ENCODE measurements at regions of chr4 and their contacts with region 1.

Region 1: GRCh38 chr4:177401658-177402273 is 40.5 kb downstream of the AGA start:
- DNase-seq: no peak
- H3K4me3 Mint-ChIP-seq: no peak overlapping the region
- H3K27ac Mint-ChIP-seq: no peak overlapping the region
- H3K4me1 Mint-ChIP-seq: peaks cover 48% of the 10 kb centered on the region
- H3K27me3 Mint-ChIP-seq: peaks cover 3% of the 10 kb centered on the region

Region 2: DNA sequence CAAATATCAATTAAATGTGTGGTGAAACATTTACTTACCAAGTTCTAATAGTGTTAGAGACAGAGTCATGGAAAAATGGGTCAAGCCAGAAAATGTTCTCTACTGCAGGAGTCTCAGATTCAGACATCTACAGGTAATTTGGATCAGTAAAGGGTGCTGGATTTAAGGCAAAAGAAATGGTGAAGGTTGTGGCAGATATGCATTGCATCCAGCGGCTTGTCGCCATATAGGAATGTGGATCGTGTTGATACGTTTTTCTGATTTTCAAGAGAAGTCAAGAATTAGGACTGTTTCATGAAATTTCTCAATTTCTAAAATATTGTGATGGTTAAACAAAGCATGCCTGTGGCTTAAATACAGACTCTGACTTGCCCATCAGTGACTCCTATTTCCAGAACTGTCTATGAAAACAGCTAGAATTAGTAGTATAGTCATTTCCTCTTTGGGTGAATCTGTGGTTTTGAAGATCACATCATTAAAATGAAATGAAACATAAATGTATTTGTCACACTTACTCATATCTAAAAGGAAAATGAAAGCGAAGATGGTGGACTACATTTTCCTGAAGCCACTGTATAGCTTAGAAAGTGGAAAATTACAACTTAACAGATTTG is 498.9 kb before region 1 on chr4:
- CTCF ChIA-PET with region 1: no interaction called
- intact Hi-C with region 1: loop called (anchors 2 kb)
- DNase-seq: no peak
- H3K4me3 Mint-ChIP-seq: no peak overlapping the region
- H3K27ac Mint-ChIP-seq: no peak overlapping the region
- H3K4me1 Mint-ChIP-seq: peaks cover 4% of the 10 kb centered on the region
- H3K27me3 Mint-ChIP-seq: no peaks in the 10 kb centered on the region

Region 3: DNA sequence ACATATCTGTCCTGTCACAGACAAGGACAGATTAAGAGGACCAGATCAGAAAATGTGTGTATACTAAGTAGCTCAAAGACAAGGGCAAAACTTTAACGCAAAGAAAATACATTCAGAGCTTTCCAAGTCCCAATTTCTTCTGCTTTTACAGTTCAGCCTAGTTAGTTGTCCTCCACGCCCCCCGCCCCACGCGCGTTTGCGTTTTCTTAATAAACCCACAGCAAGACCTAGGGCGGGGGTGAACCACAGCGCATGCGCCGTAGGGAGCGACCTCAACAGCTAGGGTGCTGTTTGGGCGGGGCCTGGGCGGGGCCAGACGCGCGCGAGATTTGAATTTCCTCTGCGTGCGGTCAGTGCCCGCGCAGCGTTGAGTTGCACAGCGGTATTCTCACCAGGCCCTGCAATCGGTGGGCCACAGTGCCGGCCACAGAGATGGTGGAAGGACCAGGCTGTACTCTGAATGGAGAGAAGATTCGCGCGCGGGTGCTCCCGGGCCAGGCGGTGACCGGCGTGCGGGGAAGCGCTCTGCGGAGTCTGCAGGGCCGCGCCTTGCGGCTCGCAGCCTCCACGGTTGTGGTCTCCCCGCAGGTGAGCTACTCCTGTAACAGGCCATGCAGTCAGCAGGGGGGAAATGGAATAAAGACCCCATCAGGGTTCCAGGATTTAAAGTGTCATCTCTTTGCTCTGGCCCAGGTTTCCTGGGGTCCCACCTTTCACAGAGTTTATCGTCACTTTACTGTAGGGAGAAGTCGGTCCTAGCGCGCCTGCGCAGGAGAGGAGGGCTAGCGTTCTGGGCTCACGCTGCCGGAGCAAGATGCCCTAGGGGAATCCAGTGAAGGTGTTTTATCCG is 92.0 kb before region 1 on chr4 and contains the start of gene NEIL3:
- CTCF ChIA-PET with region 1: no interaction called
- intact Hi-C with region 1: loop called (anchors 1 kb)
- DNase-seq: peak; percentile 98
- H3K4me3 Mint-ChIP-seq: peak within 1 kb of the TSS; percentile 91
- H3K27ac Mint-ChIP-seq: peak within 1 kb of the TSS; percentile 88
- H3K4me1 Mint-ChIP-seq: peaks cover 21% of the 10 kb centered on the region
- H3K27me3 Mint-ChIP-seq: no peaks in the 10 kb centered on the region
- total RNA-seq, gene NEIL3: 21.9 to 22.7 TPM

Region 4: GRCh38 chr4:177964693-177965168 is 563.0 kb after region 1 on chr4:
- CTCF ChIA-PET with region 1: no interaction called
- intact Hi-C with region 1: no loop called
- DNase-seq: no peak
- H3K4me3 Mint-ChIP-seq: no peak overlapping the region
- H3K27ac Mint-ChIP-seq: no peak overlapping the region
- H3K4me1 Mint-ChIP-seq: no peaks in the 10 kb centered on the region
- H3K27me3 Mint-ChIP-seq: no peaks in the 10 kb centered on the region